ENCODE measurements at regions of chr6 and their contacts with region 1.

Region 1: GRCh38 chr6:13454286-13455221 is 32.8 kb downstream of the GFOD1 start:
- DNase-seq: peak; percentile 57
- ATAC-seq: peak; percentile 44
- H3K4me3 ChIP-seq: no peak overlapping the region
- H3K27ac ChIP-seq: peak overlapping the region; percentile 84
- H3K4me1 ChIP-seq: peaks cover 35% of the 10 kb centered on the region
- H3K27me3 ChIP-seq: no peaks in the 10 kb centered on the region
- CTCF ChIP-seq: peak; percentile 30; the same call in 1 of the 2 replicates

Region 2: GRCh38 chr6:13383328-13384163 is 71.0 kb before region 1 on chr6:
- CTCF ChIA-PET with region 1: no interaction called
- POLR2A ChIA-PET with region 1: no interaction called
- intact Hi-C with region 1: loop called (anchors 2 kb)
- DNase-seq: peak; percentile 23
- ATAC-seq: peak; percentile 78
- H3K4me3 ChIP-seq: no peak overlapping the region
- H3K27ac ChIP-seq: no peak overlapping the region
- H3K4me1 ChIP-seq: peaks cover 12% of the 10 kb centered on the region; the same call in 1 of the 2 replicates
- H3K27me3 ChIP-seq: no peaks in the 10 kb centered on the region
- CTCF ChIP-seq: peak; percentile 18; the same call in 1 of the 2 replicates

Region 3: DNA sequence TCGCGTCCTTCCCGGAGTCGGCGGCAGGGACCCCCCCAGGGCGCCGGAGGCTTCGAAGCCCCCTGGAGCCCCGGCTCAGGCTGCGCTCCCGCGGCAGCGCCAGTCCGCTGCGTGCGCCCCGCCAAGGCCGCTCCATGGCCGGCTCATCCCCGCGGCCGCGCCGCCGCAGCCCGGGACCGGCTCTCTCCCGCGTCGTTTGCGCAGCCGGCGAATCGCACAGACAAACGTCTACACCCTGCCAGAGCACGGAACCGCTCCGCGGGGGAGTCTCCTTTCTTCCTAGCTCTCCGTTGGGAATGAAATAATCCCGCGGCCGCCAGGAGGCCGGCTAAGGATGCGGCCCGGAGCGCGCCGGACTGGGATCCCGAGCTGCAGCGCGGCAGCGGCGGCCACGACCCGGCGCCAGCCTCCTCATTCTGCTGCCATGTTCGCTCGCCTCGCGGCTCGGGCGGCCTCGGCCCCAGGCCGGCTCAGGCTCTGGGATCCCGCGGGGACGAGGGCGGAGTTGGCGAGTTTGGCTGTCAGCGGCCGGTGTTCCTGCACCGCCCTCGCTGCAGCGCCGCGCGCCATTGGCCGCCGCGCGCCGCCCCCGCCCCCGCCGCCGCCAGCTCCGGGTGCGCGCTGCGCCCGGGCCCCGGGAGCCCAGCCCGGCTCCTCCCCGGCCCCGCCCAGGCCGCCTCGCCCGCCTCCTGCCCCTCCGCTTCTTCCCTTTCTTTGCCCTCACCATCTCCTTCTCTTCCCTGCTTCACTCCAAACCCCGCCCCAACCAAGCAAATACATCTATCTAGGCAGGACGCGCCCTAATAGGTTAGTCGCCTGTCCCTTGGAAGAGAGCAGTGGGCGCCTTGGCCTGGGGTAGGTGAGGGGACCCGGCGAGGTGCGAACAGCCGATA is 32.8 kb after region 1 on chr6 and contains the start of gene GFOD1:
- CTCF ChIA-PET with region 1: no interaction called
- POLR2A ChIA-PET with region 1: no interaction called
- intact Hi-C with region 1: loop called (anchors 2 kb)
- DNase-seq: peak; percentile 89
- ATAC-seq: peak; percentile 81
- H3K4me3 ChIP-seq: peak within 1 kb of the TSS; percentile 85
- H3K27ac ChIP-seq: peak within 1 kb of the TSS; percentile 46
- H3K4me1 ChIP-seq: peaks cover 28% of the 10 kb centered on the region
- H3K27me3 ChIP-seq: no peaks in the 10 kb centered on the region
- CTCF ChIP-seq: peak; percentile 23; the same call in 1 of the 2 replicates
- total RNA-seq, gene GFOD1: 16.0 and 21.8 TPM in 2 replicates

Region 4: GRCh38 chr6:13538084-13538483 is 83.5 kb after region 1 on chr6:
- CTCF ChIA-PET with region 1: no interaction called
- POLR2A ChIA-PET with region 1: no interaction called
- intact Hi-C with region 1: loop called (anchors 1 kb)
- DNase-seq: peak; percentile 70
- ATAC-seq: peak; percentile 66
- H3K4me3 ChIP-seq: no peak overlapping the region
- H3K27ac ChIP-seq: no peak overlapping the region
- H3K4me1 ChIP-seq: no peaks in the 10 kb centered on the region
- H3K27me3 ChIP-seq: no peaks in the 10 kb centered on the region
- CTCF ChIP-seq: peak; percentile 72